Endothelial cell of umbilical vein (primary cell): ENCODE measurements at regions of chr6 and their contacts with region 1.

Region 1: GRCh38 chr6:52887910-52888535 is 21.5 kb downstream of the GSTA3 start:
- DNase-seq: no peak
- H3K4me3 ChIP-seq: no peak overlapping the region
- H3K27ac ChIP-seq: no peak overlapping the region
- H3K4me1 ChIP-seq: no peaks in the 10 kb centered on the region
- H3K27me3 ChIP-seq: peaks cover 6 to 7% of the 10 kb centered on the region in 2 experiments
- CTCF ChIP-seq: no peak
- POLR2A ChIP-seq: no peak

Region 2: GRCh38 chr6:52227495-52227894 is 660.5 kb before region 1 on chr6:
- CTCF ChIA-PET with region 1: no interaction called
- POLR2A ChIA-PET with region 1: no interaction called
- dilution Hi-C with region 1: no loop called
- intact Hi-C with region 1: no loop called
- DNase-seq: no peak
- H3K4me3 ChIP-seq: no peak overlapping the region
- H3K27ac ChIP-seq: no peak overlapping the region
- H3K4me1 ChIP-seq: no peaks in the 10 kb centered on the region
- H3K27me3 ChIP-seq: no peaks in the 10 kb centered on the region
- CTCF ChIP-seq: no peak
- POLR2A ChIP-seq: no peak

Region 3: DNA sequence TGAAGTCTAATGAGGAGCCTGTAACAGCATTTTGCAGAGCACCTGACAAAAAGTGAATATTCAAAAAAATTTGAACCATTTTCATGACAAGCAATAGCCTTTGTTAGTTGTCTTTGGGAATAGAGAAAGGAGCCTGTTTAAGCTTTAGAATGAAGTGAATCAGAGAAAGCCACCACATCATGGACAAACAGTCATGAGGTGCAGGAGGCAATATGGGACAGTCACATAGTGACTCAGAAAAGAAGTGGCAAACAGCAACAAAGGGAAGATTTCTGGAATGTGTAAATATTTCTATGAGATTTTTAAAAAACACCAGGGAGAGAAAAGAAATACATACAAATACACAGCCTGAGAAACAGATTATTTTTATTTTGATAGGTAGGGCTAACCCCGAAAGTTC is 771.0 kb after region 1 on chr6:
- CTCF ChIA-PET with region 1: no interaction called
- POLR2A ChIA-PET with region 1: interaction called, 14 read pairs
- dilution Hi-C with region 1: no loop called
- intact Hi-C with region 1: no loop called
- DNase-seq: no peak
- H3K4me3 ChIP-seq: no peak overlapping the region
- H3K27ac ChIP-seq: no peak overlapping the region
- H3K4me1 ChIP-seq: no peaks in the 10 kb centered on the region
- H3K27me3 ChIP-seq: peaks cover 4 to 15% of the 10 kb centered on the region in 2 experiments
- CTCF ChIP-seq: no peak
- POLR2A ChIP-seq: no peak